ENCODE measurements at regions of chr20 and their contacts with region 1.

Region 1: GRCh38 chr20:32018269-32019074 is 8.2 kb downstream of the CCM2L start:
- DNase-seq: peak; percentile 96
- ATAC-seq: peak; percentile 85
- H3K4me3 Mint-ChIP-seq: peak overlapping the region; percentile 89
- H3K27ac Mint-ChIP-seq: peak overlapping the region; percentile 96
- H3K4me1 Mint-ChIP-seq: peaks cover 33% of the 10 kb centered on the region
- H3K27me3 Mint-ChIP-seq: peaks cover 16% of the 10 kb centered on the region
- CTCF ChIP-seq: peak; percentile 6; the same call in 1 of the 2 replicates

Region 2: GRCh38 chr20:31822421-31823330 is 195.8 kb before region 1 on chr20:
- CTCF ChIA-PET with region 1: interaction called, 18 read pairs
- POLR2A ChIA-PET with region 1: interaction called, 3 read pairs
- DNase-seq: peak; percentile 92
- ATAC-seq: peak; percentile 73
- H3K4me3 Mint-ChIP-seq: peak overlapping the region; percentile 49
- H3K27ac Mint-ChIP-seq: no peak overlapping the region
- H3K4me1 Mint-ChIP-seq: peaks cover 7% of the 10 kb centered on the region; the same call in 1 of the 2 replicates
- H3K27me3 Mint-ChIP-seq: no peaks in the 10 kb centered on the region
- CTCF ChIP-seq: peak; percentile 99

Region 3: DNA sequence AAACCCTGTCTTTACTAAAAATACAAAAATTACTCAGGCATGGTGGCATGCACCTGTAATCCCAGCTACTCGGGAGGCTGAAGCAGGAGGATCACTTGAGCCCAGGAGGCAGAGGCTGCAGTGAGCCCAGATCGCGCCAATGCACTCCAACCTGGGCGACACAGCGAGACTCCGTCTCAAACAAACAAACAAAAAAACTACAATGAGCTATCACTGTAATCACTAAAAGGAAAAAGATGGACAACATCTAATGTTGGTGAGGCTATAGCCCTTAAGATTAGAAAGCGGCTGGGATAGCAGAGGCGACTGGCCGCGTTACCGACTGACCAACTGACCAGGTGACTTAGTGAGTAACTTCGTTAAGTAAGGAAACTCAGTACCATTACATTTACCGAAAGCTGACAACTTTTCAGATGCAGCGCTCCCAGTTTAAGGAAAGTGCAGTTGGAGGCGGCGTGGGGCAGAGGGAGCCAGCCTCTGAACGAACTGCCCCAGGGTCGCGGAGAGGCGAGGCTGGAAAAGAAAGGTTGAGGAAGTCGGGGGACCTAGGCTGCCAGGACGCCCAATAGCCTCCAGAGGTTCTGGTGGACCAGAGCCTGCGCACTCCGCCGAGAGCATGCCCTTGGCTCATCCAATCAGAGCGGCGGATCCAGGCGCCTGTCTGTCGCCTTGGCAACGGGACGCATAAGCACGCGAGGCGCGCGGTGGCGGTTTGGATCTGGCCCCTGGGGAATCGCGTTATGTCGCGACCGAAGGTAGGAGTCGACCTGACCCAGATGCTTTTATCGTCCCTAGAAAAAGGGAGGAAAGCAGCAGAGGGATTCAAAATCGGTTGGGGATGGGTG is 139.1 kb before region 1 on chr20:
- CTCF ChIA-PET with region 1: interaction called, 10 read pairs
- POLR2A ChIA-PET with region 1: no interaction called
- DNase-seq: peak; percentile 96
- ATAC-seq: peak; percentile 99
- H3K4me3 Mint-ChIP-seq: peak overlapping the region; percentile 92
- H3K27ac Mint-ChIP-seq: peak overlapping the region; percentile 76; the same call in 1 of the 2 replicates
- H3K4me1 Mint-ChIP-seq: no peaks in the 10 kb centered on the region
- H3K27me3 Mint-ChIP-seq: peaks cover 25% of the 10 kb centered on the region
- CTCF ChIP-seq: no peak

Region 4: DNA sequence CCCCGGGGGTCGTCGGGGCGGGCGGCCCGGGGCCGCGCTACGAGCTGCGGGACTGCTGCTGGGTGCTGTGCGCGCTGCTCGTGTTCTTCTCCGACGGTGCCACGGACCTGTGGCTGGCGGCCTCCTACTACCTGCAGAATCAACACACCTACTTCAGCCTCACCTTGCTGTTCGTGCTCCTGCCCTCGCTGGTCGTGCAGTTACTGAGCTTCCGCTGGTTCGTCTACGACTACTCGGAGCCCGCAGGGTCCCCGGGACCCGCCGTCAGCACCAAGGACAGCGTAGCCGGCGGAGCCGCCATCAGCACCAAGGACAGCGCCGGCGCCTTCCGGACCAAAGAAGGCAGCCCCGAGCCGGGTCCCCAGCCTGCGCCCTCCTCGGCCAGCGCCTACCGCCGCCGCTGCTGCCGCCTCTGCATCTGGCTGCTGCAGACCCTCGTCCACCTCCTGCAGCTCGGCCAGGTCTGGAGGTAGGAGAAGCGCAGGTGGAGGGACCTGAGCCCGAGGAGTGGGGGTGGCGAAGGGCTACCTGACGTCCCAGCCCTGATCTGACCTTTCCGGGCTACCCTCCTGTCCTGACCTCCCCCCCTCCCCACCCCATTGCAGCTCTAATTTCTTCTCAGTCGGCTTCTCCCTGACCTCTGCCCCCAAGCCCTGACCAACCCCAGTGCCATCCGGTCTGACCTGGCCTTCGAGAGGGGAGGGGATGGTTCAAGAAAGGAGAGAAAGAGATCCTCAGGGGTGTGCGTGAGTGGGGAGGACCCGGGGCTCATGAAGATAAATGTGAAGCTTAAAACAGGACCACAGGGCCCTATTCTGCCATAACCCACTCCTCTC is 50.0 kb before region 1 on chr20:
- CTCF ChIA-PET with region 1: interaction called, 28 read pairs
- POLR2A ChIA-PET with region 1: no interaction called
- DNase-seq: peak; percentile 95
- ATAC-seq: peak; percentile 85
- H3K4me3 Mint-ChIP-seq: peak overlapping the region; percentile 93
- H3K27ac Mint-ChIP-seq: peak overlapping the region; percentile 88; the same call in 1 of the 2 replicates
- H3K4me1 Mint-ChIP-seq: peaks cover 20% of the 10 kb centered on the region
- H3K27me3 Mint-ChIP-seq: peaks cover 47% of the 10 kb centered on the region
- CTCF ChIP-seq: no peak

Region 5: DNA sequence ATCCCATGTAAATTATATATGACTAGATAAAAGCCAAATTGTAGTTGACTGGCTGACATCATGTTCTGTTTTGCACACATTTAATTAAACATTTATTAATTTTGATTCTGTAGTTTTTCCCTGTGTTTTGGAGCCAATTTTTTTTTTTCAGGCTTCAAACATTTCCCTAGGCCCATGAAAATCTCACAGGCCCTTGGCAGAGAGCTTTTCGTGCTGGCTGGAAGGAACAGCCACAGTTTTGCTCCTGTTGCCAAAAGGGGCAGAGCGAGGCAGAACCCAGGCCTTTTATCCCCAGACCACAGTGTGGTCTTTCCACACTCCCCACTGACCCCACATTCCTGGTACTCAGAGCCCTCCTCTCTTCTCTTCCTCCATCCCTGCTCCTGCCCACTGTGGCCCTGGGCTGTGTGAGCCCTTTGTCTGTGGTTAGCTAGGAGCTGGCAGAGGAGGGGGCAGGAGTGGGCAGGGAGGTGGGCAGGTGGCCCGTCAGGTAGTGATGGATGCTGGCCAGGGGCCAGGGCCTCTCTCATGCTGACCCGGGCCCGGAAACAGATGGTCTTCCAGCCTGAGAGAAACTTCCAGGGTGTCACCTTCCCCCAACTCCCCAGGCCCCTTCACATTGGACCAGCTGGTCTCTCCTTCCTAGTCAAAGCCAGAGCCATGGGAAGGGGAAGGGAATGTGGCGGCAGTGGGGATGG is 27.7 kb before region 1 on chr20:
- CTCF ChIA-PET with region 1: interaction called, 19 read pairs
- POLR2A ChIA-PET with region 1: no interaction called
- DNase-seq: no peak
- ATAC-seq: no peak
- H3K4me3 Mint-ChIP-seq: no peak overlapping the region
- H3K27ac Mint-ChIP-seq: no peak overlapping the region
- H3K4me1 Mint-ChIP-seq: peaks cover 9% of the 10 kb centered on the region
- H3K27me3 Mint-ChIP-seq: peaks cover 41% of the 10 kb centered on the region
- CTCF ChIP-seq: no peak

Region 6: GRCh38 chr20:32031007-32031958 is 12.8 kb after region 1 on chr20:
- CTCF ChIA-PET with region 1: interaction called, 37 read pairs
- POLR2A ChIA-PET with region 1: interaction called, 5 read pairs
- DNase-seq: peak; percentile 95
- ATAC-seq: peak; percentile 99
- H3K4me3 Mint-ChIP-seq: peak overlapping the region; percentile 56
- H3K27ac Mint-ChIP-seq: no peak overlapping the region
- H3K4me1 Mint-ChIP-seq: peaks cover 13% of the 10 kb centered on the region
- H3K27me3 Mint-ChIP-seq: peaks cover 7% of the 10 kb centered on the region
- CTCF ChIP-seq: peak; percentile 100

Region 7: DNA sequence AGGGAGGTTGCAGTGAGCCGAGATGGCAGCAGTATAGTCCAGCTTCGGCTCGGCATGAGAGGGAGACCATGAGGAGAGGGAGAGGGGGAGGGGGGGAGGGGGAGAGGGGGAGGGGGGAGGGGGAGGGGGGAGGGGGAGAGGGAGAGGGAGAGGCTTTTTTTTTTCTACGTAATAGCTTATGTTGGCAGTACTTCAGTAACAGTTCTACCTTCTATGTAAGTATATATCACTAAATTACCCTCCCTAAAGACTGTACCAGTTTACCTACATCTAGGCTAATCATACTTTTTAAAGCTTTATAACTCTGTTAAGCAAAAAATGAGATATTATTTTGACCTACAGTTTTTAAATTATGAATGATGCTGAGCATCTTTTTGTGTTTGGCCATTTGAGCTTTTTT is 104.6 kb after region 1 on chr20:
- CTCF ChIA-PET with region 1: no interaction called
- POLR2A ChIA-PET with region 1: no interaction called
- DNase-seq: no peak
- ATAC-seq: no peak
- H3K4me3 Mint-ChIP-seq: no peak overlapping the region
- H3K27ac Mint-ChIP-seq: no peak overlapping the region
- H3K4me1 Mint-ChIP-seq: peaks cover 17% of the 10 kb centered on the region
- H3K27me3 Mint-ChIP-seq: no peaks in the 10 kb centered on the region
- CTCF ChIP-seq: no peak

Region 8: GRCh38 chr20:32315891-32316290 is 297.4 kb after region 1 on chr20:
- CTCF ChIA-PET with region 1: no interaction called
- POLR2A ChIA-PET with region 1: no interaction called
- DNase-seq: no peak
- ATAC-seq: no peak
- H3K4me3 Mint-ChIP-seq: no peak overlapping the region
- H3K27ac Mint-ChIP-seq: no peak overlapping the region
- H3K4me1 Mint-ChIP-seq: no peaks in the 10 kb centered on the region
- H3K27me3 Mint-ChIP-seq: no peaks in the 10 kb centered on the region
- CTCF ChIP-seq: no peak